ENCODE measurements at regions of chrX and their contacts with region 1.

Region 1: GRCh38 chrX:48475774-48476577 is at the start of gene FTSJ1:
- DNase-seq: peak; percentile 89
- ATAC-seq: peak; percentile 93
- H3K4me3 ChIP-seq: peak within 1 kb of the TSS; percentile 91
- H3K27ac ChIP-seq: peak within 1 kb of the TSS; percentile 87
- H3K4me1 ChIP-seq: peaks cover 19% of the 10 kb centered on the region
- H3K27me3 ChIP-seq: no peaks in the 10 kb centered on the region
- CTCF ChIP-seq: no peak
- total RNA-seq, gene FTSJ1: 175 and 189 TPM in 2 replicates

Region 2: GRCh38 chrX:48493890-48494364 is 18.0 kb after region 1 on chrX:
- CTCF ChIA-PET with region 1: interaction called, 4 read pairs
- POLR2A ChIA-PET with region 1: no interaction called
- intact Hi-C with region 1: loop called (anchors 2 kb)
- DNase-seq: peak; percentile 48
- ATAC-seq: no peak
- H3K4me3 ChIP-seq: no peak overlapping the region
- H3K27ac ChIP-seq: no peak overlapping the region
- H3K4me1 ChIP-seq: peaks cover 49% of the 10 kb centered on the region
- H3K27me3 ChIP-seq: no peaks in the 10 kb centered on the region
- CTCF ChIP-seq: peak; percentile 59

Region 3: DNA sequence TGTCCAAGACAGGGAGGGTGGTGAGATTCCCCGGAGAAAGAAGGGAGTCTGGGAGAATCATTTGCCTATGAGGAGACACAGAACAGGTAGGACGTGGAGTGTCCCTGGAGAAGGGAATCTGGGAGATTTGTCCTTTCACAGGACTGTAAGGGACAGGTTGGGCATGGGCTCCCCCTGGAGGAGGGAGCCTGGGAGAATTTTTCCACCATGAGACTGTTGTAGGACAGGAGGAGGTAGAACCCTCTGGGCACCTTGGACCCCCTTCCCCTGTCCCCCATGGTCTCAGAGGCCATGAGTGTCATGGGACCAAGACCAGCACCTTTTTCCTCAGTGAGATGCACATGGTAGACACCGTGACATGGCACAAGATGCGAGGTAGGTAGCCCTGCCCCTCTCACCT is 35.6 kb after region 1 on chrX:
- CTCF ChIA-PET with region 1: no interaction called
- POLR2A ChIA-PET with region 1: no interaction called
- intact Hi-C with region 1: loop called (anchors 1 kb)
- DNase-seq: peak; percentile 69
- ATAC-seq: peak; percentile 37; the same call in 1 of the 2 replicates
- H3K4me3 ChIP-seq: no peak overlapping the region
- H3K27ac ChIP-seq: no peak overlapping the region
- H3K4me1 ChIP-seq: peaks cover 11% of the 10 kb centered on the region; the same call in 1 of the 2 replicates
- H3K27me3 ChIP-seq: no peaks in the 10 kb centered on the region
- CTCF ChIP-seq: peak; percentile 67

Region 4: GRCh38 chrX:48597353-48598264 is 121.6 kb after region 1 on chrX and contains the start of gene WDR13:
- CTCF ChIA-PET with region 1: no interaction called
- POLR2A ChIA-PET with region 1: no interaction called
- intact Hi-C with region 1: loop called (anchors 5 kb)
- DNase-seq: peak; percentile 96
- ATAC-seq: peak; percentile 89
- H3K4me3 ChIP-seq: peak within 1 kb of the TSS; percentile 82
- H3K27ac ChIP-seq: peak within 1 kb of the TSS; percentile 99
- H3K4me1 ChIP-seq: peaks cover 8% of the 10 kb centered on the region
- H3K27me3 ChIP-seq: no peaks in the 10 kb centered on the region
- CTCF ChIP-seq: no peak
- total RNA-seq, gene WDR13: 93.3 and 106 TPM in 2 replicates

Region 5: DNA sequence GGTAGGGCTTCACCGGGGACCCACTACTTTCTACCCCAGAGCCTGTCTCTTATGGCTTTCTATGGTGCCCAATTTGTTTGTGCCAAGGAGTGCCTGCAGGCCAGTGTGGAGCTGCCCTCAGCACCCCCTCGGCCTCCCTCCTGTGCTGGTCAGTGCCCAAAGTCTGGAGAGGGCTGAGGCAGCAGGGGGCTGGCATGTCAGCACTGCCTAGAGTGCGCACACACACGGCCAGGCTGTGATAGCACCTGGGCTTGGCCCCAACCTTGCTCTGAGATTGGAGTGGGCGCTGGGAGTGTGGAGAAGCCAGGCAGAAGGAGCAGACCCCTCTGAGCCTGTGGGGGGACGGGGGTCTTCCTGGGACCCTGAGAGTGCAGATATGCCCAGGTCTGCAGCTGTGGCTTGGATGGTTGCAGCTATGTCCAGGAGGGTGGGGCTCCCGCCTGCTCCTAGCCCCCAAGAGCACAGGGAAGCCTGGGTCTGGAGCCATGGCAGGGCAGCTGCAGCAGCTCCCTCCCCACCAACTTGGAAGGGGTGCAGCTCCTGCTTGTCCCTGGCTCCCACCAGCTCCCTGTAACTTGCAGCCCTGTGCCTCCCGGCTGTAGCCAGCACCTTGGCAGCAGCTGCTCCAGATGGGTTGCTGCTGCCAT is 1169.1 kb after region 1 on chrX:
- CTCF ChIA-PET with region 1: no interaction called
- POLR2A ChIA-PET with region 1: no interaction called
- intact Hi-C with region 1: no loop called
- DNase-seq: no peak
- ATAC-seq: no peak
- H3K4me3 ChIP-seq: no peak overlapping the region
- H3K27ac ChIP-seq: no peak overlapping the region
- H3K4me1 ChIP-seq: no peaks in the 10 kb centered on the region
- H3K27me3 ChIP-seq: peaks cover 13% of the 10 kb centered on the region; the same call in 1 of the 2 replicates
- CTCF ChIP-seq: no peak

Measured in PC-3 (cell line).